Ascending aorta (tissue), 2 donors: ENCODE measurements at regions of chr14 and their contacts with region 1.

Region 1: GRCh38 chr14:39102969-39103957 is at the start of gene SEC23A:
- DNase-seq: peak; percentile 75 to 96
- H3K4me3 ChIP-seq: peak within 1 kb of the TSS; percentile 83 to 95
- H3K27ac ChIP-seq: peak within 1 kb of the TSS; percentile 98 to 99
- H3K4me1 ChIP-seq: peaks cover 0 to 26% of the 10 kb centered on the region in 2 donors
- H3K27me3 ChIP-seq: no peaks in the 10 kb centered on the region
- CTCF ChIP-seq: no peak
- total RNA-seq, gene SEC23A: 74.8 TPM

Region 2: DNA sequence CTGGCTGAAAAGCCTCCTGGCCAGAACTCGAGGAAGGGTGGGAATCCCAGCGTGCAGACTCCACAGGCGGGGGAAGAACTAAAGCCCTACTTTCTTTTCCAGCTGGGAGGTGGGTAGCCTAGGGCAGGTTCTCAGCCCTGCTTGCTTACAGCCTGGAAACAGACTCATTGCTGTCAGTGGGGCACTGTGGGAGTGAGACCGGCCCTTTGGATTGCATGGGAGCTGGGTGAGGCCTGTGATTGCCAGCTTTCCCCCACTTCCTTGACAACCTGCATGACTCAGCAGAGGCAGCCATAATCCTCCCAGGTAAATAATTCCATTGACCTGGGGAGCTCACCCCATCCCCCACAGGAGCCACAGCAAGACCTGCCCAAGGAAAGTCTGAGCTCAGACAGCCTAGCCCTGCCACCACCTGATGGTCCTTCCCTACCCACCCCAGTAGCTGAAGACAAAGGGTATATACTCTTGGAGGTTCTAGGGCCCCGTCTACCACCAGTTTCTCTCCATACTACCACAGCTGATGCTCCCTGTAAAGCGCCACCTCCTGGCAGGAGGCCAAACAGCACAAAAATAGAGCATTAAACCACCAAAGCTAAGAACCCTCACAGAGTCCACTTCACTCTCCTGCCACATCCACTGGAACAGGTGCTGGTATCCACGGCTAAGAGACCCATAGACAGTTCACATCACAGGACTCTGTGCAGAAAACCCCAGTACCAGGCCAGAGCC is 294.4 kb before region 1 on chr14:
- intact Hi-C with region 1: no loop called
- DNase-seq: no peak
- H3K4me3 ChIP-seq: no peak overlapping the region
- H3K27ac ChIP-seq: no peak overlapping the region
- H3K4me1 ChIP-seq: no peaks in the 10 kb centered on the region
- H3K27me3 ChIP-seq: no peaks in the 10 kb centered on the region
- CTCF ChIP-seq: no peak

Region 3: DNA sequence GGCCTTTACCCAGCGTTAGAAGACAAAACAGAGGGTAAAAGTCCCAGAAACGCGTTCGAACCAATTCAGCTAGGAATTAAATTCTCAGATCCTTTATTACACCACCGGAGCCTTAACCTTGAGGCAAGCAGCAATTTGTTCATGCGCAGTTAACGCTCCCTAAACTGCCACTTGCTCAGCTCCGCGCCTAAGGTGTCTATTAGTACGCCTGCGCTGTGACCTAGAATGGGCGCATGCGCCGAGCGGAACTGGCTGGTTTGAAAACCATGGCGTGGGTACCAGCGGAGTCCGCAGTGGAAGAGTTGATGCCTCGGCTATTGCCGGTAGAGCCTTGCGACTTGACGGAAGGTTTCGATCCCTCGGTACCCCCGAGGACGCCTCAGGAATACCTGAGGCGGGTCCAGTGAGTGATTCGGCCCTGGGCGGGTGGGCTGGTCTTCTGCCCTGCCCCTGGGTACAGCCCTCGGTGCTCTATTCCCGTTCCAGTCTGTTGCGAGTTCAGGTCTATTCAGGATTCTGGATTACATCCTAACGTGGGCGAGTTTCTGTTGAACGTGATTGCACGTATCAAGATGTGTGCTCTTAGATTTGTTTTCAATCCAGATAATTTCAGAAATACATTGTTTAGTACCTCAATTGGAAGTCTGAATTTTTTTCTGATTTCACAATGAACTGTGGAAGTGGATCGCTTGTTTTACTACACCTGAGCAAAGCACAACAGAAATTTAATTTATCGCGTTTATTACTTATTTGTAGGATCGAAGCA is 11.0 kb after region 1 on chr14 and contains the start of gene GEMIN2:
- intact Hi-C with region 1: loop called (anchors 1 kb)
- DNase-seq: peak; percentile 77 to 97
- H3K4me3 ChIP-seq: peak within 1 kb of the TSS; percentile 75 to 80
- H3K27ac ChIP-seq: peak within 1 kb of the TSS; percentile 24 to 66
- H3K4me1 ChIP-seq: peaks cover 0 to 5% of the 10 kb centered on the region in 2 donors
- H3K27me3 ChIP-seq: no peaks in the 10 kb centered on the region
- CTCF ChIP-seq: no peak
- total RNA-seq, gene GEMIN2: 23.8 TPM

Region 4: DNA sequence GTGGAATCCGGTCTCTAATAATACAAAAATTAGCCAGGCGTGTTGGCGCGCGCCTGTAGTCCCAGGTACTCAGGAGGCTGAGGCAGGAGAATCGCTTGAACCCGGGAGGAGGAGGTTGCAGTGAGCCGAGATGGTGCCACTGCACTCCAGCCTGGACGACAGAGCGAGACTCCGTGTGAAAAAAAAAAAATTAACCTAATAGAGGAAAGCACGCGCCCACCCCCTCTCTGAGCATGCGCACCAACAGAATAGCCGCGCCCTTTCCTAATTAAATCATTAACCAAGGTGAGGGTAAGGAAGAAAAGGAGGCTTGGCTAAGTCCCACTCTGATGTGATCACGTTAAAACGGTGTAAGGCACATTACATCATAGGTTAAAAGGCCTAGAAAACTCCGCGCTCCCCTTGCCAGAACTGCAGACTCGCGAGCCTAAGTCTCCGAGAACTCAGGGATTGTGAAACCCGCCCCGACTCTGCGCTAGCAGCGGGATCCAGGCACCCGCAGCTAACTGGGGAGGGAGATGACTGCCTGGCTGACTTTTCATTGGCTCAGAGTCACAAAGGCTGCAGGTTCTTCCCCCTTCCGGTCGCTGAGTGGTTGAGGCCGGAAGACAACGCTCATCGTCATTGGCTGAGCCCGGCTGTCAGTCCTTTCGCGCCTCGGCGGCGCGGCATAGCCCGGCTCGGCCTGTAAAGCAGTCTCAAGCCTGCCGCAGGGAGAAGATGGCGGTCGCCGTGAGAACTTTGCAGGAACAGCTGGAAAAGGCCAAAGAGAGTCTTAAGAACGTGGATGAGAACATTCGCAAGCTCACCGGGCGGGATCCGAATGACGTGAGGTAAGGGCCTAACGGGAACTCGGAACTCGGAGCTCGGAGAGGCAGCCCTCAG is 71.5 kb after region 1 on chr14 and contains the start of gene PNN:
- intact Hi-C with region 1: loop called (anchors 1 kb)
- DNase-seq: peak; percentile 92 to 99
- H3K4me3 ChIP-seq: peak within 1 kb of the TSS; percentile 72 to 92
- H3K27ac ChIP-seq: peak within 1 kb of the TSS; percentile 94 to 95
- H3K4me1 ChIP-seq: peaks cover 5 to 16% of the 10 kb centered on the region in 2 donors
- H3K27me3 ChIP-seq: no peaks in the 10 kb centered on the region
- CTCF ChIP-seq: no peak
- total RNA-seq, gene PNN: 19.3 TPM

Region 5: DNA sequence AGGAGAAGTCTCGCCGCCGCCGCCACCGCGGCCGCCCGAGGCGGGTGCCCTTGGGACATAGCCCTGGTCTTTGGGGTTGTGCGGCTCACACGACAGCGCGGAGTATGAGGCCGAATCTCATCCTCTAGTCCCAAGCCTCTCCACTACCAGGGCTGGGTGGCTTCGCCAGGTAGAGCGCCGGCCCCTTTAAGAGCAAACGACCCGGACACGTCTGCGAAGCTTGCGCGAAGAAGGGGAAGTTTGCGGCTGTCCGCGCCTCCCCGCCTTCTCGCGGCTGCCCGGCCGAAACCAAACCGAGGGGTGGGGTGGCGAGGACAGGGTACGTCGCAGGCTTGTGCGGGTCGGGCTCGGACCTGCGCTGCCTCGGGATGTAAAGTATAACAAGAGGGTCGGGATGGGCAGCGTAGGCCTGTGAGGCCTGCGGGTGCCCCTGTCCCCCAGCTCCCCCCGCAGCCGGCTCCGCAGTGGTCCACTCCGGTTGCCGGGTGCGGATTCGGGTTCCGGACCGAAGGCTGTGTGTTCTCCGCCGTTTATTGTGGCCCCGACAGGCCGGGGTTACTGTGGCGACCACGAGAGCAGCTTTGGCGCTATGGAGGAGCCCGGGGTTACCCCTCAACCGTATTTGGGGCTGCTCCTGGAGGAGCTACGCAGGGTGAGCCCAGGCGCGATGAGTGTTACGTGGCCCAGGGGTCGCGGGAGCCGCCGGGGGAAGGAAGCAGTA is 163.8 kb after region 1 on chr14:
- intact Hi-C with region 1: loop called (anchors 2 kb)
- DNase-seq: peak; percentile 27 to 86
- H3K4me3 ChIP-seq: peak overlapping the region; percentile 93 to 94
- H3K27ac ChIP-seq: peak overlapping the region; percentile 99 to 100
- H3K4me1 ChIP-seq: peaks cover 0 to 21% of the 10 kb centered on the region in 2 donors
- H3K27me3 ChIP-seq: no peaks in the 10 kb centered on the region
- CTCF ChIP-seq: no peak

Region 6: GRCh38 chr14:39368261-39368959 is 265.1 kb after region 1 on chr14:
- intact Hi-C with region 1: loop called (anchors 5 kb)
- DNase-seq: no peak
- H3K4me3 ChIP-seq: no peak overlapping the region
- H3K27ac ChIP-seq: no peak overlapping the region
- H3K4me1 ChIP-seq: no peaks in the 10 kb centered on the region
- H3K27me3 ChIP-seq: no peaks in the 10 kb centered on the region
- CTCF ChIP-seq: peak; percentile 9 to 49 (median 43)

Region 7: GRCh38 chr14:39432179-39432618 is 328.9 kb after region 1 on chr14 and contains the start of gene FBXO33:
- intact Hi-C with region 1: loop called (anchors 1 kb)
- DNase-seq: peak; percentile 84 to 98
- H3K4me3 ChIP-seq: peak within 1 kb of the TSS; percentile 95 to 98
- H3K27ac ChIP-seq: peak within 1 kb of the TSS; percentile 93 to 95
- H3K4me1 ChIP-seq: peaks cover 0 to 12% of the 10 kb centered on the region in 2 donors
- H3K27me3 ChIP-seq: no peaks in the 10 kb centered on the region
- CTCF ChIP-seq: no peak
- total RNA-seq, gene FBXO33: 14.5 TPM